Activated T-helper 1 cell treated with anti-CD3 and anti-CD28 coated beads, Interleukin-12 subunit alpha, Interleukin-12 subunit beta, Interleukin-2, Interleukin-4 antibody, amounts not matched to agents 30 ng/mL and 10 ng/mL and 1 ng/mL, durations not matched to agents 14 hours and 24 hours and 36 hours (primary cell): ENCODE measurements at regions of chr5 and their contacts with region 1.

Region 1: DNA sequence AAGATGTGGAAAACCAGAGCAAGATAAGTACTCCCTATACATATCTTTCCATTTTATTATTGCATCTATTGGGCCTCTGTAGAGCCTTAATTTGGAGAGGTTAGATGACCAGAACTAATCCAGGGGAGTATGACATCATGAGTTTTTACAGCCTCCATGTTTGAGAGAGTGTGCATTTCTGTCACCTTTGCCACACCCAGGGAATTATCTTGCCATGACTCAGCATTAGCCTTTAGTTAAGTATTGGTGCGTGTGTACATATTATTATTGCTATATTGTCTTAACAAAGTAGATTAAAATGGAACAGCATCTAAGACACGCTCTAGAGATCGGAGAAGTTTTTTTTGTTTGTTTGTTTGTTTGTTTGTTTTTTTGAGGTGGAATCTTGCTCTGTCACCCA is 27.6 kb downstream of the DIMT1 start:
- DNase-seq: no peak
- H3K4me3 Mint-ChIP-seq: no peak overlapping the region
- H3K27ac Mint-ChIP-seq: no peak overlapping the region
- H3K4me1 Mint-ChIP-seq: peaks cover 6% of the 10 kb centered on the region
- H3K27me3 Mint-ChIP-seq: no peaks in the 10 kb centered on the region

Region 2: GRCh38 chr5:61933787-61934626 is 442.1 kb before region 1 on chr5:
- intact Hi-C with region 1: no loop called
- DNase-seq: no peak
- H3K4me3 Mint-ChIP-seq: no peak overlapping the region
- H3K27ac Mint-ChIP-seq: no peak overlapping the region
- H3K4me1 Mint-ChIP-seq: no peaks in the 10 kb centered on the region
- H3K27me3 Mint-ChIP-seq: no peaks in the 10 kb centered on the region

Region 3: GRCh38 chr5:62362701-62363100 is 13.4 kb before region 1 on chr5:
- intact Hi-C with region 1: loop called (anchors 2 kb)
- DNase-seq: no peak
- H3K4me3 Mint-ChIP-seq: no peak overlapping the region
- H3K27ac Mint-ChIP-seq: no peak overlapping the region
- H3K4me1 Mint-ChIP-seq: peaks cover 5% of the 10 kb centered on the region
- H3K27me3 Mint-ChIP-seq: no peaks in the 10 kb centered on the region

Region 4: DNA sequence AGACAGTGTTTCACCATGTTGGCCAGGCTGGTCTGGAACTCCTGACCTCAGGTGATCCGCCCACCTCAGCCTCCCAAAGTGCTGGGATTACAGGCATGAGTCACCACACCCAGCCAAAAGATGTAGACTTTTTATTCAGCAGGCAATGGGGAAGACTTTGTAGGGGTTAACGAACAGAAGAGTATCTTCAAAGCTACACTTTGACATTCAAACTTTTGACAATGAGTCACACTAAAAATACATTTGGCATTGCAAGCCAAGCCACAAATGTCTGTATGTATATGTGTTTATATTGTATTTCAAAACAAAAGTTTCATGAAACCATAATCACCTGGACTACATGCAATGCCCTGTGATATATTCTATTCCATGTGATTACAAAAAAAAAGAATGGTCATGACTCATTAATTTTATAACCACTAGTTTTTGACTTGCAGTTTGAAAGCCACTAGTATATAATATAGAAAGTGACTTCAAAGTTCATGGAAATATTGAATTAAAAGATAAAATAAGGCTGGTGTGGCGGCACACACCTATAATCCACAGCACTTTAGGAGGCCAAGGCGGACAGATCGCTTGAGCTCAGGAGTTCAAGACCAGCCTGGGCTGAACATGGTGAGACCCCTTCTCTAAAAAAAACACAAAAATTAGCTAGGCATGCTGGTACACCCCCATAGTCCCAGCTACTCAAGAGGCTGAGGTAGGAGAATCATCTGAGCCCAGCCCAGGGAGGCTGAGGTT is 19.3 kb after region 1 on chr5:
- intact Hi-C with region 1: loop called (anchors 2 kb)
- DNase-seq: no peak
- H3K4me3 Mint-ChIP-seq: no peak overlapping the region
- H3K27ac Mint-ChIP-seq: peak overlapping the region; percentile 79
- H3K4me1 Mint-ChIP-seq: peaks cover 31% of the 10 kb centered on the region
- H3K27me3 Mint-ChIP-seq: no peaks in the 10 kb centered on the region